A673 (cell line): ENCODE measurements at regions of chr19 and their contacts with region 1.

Region 1: DNA sequence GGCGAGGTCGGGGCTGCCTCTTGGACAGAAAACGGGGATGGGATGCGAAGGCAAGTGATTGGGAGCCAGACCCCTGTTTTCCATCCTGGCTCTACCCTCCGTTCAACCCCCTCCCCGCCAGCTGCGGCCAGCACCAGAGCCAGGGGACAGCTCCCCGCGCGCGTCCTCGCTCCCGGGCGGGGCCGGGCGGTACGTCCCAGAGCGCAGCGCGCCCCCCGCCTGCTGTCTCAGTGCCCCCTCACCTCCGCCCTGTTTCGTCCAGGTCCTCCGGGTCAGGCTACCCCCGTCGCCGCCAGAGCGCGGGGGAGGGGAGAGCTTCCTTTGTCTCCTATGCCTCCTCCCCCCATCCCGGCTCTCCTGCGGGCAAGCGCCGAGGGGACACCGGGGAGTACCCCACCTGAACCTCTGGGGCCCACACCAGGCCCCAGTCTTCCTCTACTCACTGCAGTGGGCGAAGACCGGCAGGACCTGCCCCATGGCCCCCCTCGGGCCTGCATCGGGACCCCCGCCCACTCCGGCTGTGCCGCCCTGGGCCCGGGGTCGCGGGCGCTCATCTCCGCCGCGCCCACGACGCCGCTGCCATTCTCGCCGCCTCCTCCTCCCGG is 396 bp downstream of the RTN2 start:
- DNase-seq: peak; percentile 54
- H3K4me3 ChIP-seq: peak overlapping the region; percentile 67
- H3K27ac ChIP-seq: peak overlapping the region; percentile 23
- H3K4me1 ChIP-seq: peaks cover 22% of the 10 kb centered on the region
- H3K27me3 ChIP-seq: no peaks in the 10 kb centered on the region
- CTCF ChIP-seq: no peak

Region 2: DNA sequence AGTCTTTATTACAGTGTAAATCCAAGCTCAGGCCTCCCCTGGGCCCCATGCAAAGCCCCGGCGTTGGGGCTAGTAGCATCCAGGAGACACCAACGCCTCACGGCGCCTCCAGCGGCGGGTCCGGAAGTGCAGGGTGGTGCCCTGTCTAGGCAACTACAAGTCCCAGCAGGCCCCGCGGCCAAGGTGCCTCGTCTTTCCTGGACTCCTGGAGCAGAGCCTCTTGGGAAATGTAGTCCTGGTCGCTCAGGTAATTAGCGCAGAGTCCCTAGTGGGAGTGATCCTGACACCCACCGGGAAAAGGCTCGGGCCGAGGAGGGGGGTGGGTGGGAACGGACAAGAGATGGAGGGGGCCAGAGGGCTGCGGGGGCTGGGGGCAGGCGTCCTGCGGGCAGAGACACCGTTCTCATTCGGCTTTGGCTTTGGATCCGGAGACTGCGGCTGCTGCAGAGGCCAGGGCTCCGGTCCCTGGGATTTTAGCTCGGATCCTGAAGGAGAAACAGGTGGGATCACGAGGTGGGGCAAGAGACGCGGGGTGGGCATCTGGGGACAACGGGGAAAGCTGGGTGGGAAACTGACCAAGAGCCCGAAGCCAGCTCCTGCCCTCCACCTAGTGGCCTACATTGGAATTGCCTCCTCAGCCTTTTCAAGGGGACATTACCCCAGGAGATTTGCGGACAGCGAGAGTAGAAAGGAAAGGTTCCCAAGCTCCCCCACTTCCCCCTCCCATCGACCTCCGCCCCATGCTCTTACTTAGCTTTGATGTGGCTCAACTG is 11.0 kb before region 1 on chr19:
- CTCF ChIA-PET with region 1: interaction called, 11 read pairs
- POLR2A ChIA-PET with region 1: no interaction called
- intact Hi-C with region 1: no loop called
- DNase-seq: peak; percentile 98
- H3K4me3 ChIP-seq: peak overlapping the region; percentile 64
- H3K27ac ChIP-seq: peak overlapping the region; percentile 68
- H3K4me1 ChIP-seq: no peaks in the 10 kb centered on the region
- H3K27me3 ChIP-seq: no peaks in the 10 kb centered on the region
- CTCF ChIP-seq: peak; percentile 79

Region 3: DNA sequence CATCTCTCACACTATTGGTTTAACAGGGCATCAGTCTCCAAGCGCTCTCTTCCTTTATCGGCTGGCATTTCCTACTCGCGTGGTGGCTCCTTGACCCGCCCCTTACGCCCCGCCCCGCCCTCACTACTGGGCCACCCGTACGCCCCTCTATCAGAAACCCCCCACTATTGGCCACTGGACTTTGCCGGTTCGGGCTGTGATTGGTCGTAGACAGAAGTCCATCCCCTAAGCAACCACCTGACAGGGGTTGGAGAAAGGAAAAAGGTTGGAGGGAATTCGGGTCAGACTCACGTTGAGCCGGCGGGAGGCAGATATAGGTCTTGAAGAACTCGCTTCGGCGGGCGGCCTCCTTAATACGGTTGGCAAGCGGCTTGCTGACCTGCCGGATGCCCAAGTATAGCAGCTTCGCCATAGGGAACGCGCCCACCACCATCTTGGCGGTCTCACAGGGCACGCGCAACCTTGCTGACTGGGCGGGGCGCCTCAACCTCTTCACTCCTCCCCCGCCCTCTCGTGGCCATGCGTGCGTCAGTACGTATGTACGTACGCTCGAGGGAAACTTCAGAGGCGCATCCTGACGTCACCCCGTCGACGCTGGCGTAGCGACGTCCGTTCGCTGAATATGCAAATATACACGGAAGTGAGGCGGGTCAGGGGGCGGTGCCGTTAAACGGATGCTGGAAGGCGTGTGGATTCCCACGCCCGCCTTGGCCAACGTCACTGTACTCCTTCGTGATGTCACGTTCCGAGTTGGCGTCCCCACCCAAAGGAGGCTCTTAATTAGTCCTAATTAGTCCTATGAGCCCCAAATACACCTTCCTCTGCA is 88.1 kb after region 1 on chr19 and contains the start of gene OPA3:
- CTCF ChIA-PET with region 1: no interaction called
- POLR2A ChIA-PET with region 1: no interaction called
- intact Hi-C with region 1: loop called (anchors 1 kb)
- DNase-seq: peak; percentile 100
- H3K4me3 ChIP-seq: peak within 1 kb of the TSS; percentile 63
- H3K27ac ChIP-seq: peak within 1 kb of the TSS; percentile 92
- H3K4me1 ChIP-seq: no peaks in the 10 kb centered on the region
- H3K27me3 ChIP-seq: no peaks in the 10 kb centered on the region
- CTCF ChIP-seq: no peak
- total RNA-seq, gene OPA3: 13.5 and 15.2 TPM in 2 replicates

Region 4: DNA sequence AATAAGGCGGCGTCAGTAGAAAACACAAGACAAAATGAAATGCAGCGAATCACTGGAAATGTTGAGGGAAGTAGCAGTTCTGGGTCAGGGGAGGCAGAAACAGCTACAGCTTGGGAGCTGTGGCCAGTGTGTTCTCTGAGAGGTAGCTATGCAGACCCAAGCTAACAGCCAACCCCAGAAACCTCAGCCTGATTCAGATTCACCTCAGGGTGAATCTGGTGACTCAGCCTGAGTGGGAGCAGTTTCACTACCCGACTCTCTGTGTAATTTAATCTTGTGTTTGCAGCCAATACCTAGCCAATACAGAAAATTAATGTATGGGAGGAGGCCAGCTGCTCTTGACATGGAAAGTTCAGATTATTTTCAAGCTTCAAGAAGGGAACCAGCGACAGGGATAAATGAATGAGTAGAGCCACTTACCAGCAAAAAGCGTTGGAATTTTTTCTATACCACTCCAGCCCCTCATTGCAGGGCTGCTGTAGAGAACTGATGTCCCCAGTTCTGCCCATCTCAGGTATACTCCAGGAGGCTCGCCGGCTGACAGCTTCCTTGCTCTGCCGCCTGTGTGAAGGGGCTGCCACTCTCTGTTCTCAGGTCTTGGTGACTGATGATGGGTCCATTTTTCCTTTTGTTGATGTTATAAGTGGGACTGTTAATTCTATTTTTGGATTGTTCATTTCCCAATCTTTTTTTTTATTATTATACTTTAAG is 619.1 kb after region 1 on chr19:
- CTCF ChIA-PET with region 1: no interaction called
- POLR2A ChIA-PET with region 1: no interaction called
- intact Hi-C with region 1: no loop called
- DNase-seq: no peak
- H3K4me3 ChIP-seq: no peak overlapping the region
- H3K27ac ChIP-seq: no peak overlapping the region
- H3K4me1 ChIP-seq: no peaks in the 10 kb centered on the region
- H3K27me3 ChIP-seq: peaks cover 3% of the 10 kb centered on the region
- CTCF ChIP-seq: no peak